Posterior vena cava (tissue), 2 donors: ENCODE measurements at regions of chr14 and their contacts with region 1.

Region 1: DNA sequence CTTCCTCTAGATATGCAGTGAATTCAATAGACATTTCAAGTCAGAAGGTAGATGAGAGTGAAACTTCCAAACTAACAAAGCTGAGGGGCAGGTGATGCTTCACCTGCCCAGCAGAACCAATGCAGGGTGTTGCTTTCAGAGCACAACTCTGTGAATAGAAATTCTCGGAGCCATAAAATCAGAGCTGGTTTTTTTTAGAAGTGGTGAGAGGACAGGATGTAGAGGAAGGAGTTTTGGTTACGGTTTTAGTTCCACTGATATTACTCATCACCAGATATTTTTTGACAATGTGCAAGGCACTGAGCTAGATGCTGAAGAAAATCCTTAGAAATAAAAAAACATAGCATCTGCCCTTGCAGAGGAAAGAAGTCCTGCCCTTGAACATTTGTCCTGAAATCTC is 62.2 kb downstream of the BMP4 start:
- DNase-seq: no peak

Region 2: GRCh38 chr14:53915364-53916014 is 21.0 kb after region 1 on chr14:
- intact Hi-C with region 1: loop called in 1 of 2 experiments (anchors 1 kb)
- DNase-seq: no peak